Thyroid gland (tissue), 4 donors: ENCODE measurements at regions of chr4 and their contacts with region 1.

Region 1: DNA sequence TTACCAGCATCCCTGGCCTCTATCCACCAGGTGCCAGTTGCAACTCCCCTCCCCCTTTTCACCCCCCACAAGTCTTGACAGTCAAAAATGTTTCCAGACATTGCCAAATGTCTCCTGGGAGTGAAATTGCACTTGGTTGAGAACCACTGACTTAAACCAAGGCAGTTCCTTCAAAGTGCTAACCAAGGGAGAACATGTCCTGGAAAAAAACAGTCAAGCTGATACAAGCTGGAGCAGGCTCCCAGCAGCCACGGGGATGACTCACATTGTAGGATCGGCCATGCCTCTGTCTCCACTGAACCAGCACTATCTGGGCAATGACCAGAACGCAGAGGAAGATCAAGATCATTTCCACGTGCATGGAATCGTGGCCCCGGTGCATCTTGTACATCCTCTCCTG is 11.4 kb downstream of the RNF175 start:
- DNase-seq: peak; percentile 22 to 39
- H3K4me3 ChIP-seq: no peak overlapping the region
- H3K27ac ChIP-seq: no peak overlapping the region
- H3K4me1 ChIP-seq: peaks cover 4 to 10% of the 10 kb centered on the region in 2 donors
- H3K27me3 ChIP-seq: no peaks in the 10 kb centered on the region
- CTCF ChIP-seq: no peak
- POLR2A ChIP-seq: no peak

Region 2: DNA sequence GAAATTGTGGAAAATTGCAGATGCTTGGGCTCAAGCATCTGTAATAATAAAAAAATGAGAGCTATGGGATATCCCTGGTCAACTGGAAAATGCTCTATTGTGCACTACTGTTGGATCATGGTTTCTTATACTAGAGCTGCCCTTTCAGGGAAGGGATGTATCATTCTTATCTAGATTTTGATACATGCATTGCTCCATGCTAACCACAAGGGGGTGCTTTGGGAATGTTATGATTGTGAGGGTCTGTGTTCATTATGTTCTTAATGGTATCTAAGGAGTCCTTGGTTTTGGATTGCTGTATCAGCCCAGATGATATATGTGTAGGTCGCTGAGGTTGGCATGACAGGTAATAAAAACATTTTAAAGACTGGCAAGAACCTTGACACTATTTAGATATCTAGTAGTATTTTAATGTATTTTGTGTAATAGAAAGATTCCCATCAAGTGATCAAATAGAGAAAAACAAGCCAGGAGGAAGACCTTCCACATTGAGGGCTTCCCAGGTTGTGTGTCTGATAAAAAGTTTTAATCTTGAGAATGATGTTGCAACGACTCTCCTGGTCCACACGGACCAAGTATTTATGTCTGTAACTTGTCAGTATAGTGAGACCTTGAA is 113.5 kb before region 1 on chr4:
- intact Hi-C with region 1: loop called (anchors 5 kb)
- DNase-seq: no peak
- H3K4me3 ChIP-seq: no peak overlapping the region
- H3K27ac ChIP-seq: no peak overlapping the region
- H3K4me1 ChIP-seq: no peaks in the 10 kb centered on the region
- H3K27me3 ChIP-seq: no peaks in the 10 kb centered on the region
- CTCF ChIP-seq: peak; percentile 12 to 56 (median 41)
- POLR2A ChIP-seq: no peak